ENCODE measurements at regions of chr4 and their contacts with region 1.

Region 1: GRCh38 chr4:74189331-74190043 is 31.6 kb downstream of the MTHFD2L start:
- DNase-seq: no peak
- H3K4me3 Mint-ChIP-seq: no peak overlapping the region
- H3K27ac Mint-ChIP-seq: no peak overlapping the region
- H3K4me1 Mint-ChIP-seq: no peaks in the 10 kb centered on the region
- H3K27me3 Mint-ChIP-seq: peaks cover 7% of the 10 kb centered on the region

Region 2: GRCh38 chr4:74235135-74235534 is 45.6 kb after region 1 on chr4:
- intact Hi-C with region 1: no loop called
- DNase-seq: no peak
- H3K4me3 Mint-ChIP-seq: no peak overlapping the region
- H3K27ac Mint-ChIP-seq: no peak overlapping the region
- H3K4me1 Mint-ChIP-seq: peaks cover 22% of the 10 kb centered on the region
- H3K27me3 Mint-ChIP-seq: no peaks in the 10 kb centered on the region

Region 3: GRCh38 chr4:74311696-74312313 is 122.3 kb after region 1 on chr4:
- intact Hi-C with region 1: loop called (anchors 1 kb)
- DNase-seq: no peak
- H3K4me3 Mint-ChIP-seq: no peak overlapping the region
- H3K27ac Mint-ChIP-seq: no peak overlapping the region
- H3K4me1 Mint-ChIP-seq: peaks cover 21% of the 10 kb centered on the region
- H3K27me3 Mint-ChIP-seq: peaks cover 3% of the 10 kb centered on the region

Measured in activated T-helper 2 cell treated with anti-CD3 and anti-CD28 coated beads, Interferon-gamma antibody, Interleukin-2, Interleukin-4, amounts not matched to agents 10 μg/mL and 5 μg/mL and 100 μg/mL, durations not matched to agents 14 hours and 24 hours and 36 hours (primary cell).